Breast epithelium (tissue), 4 donors: ENCODE measurements at regions of chr11 and their contacts with region 1.

Region 1: GRCh38 chr11:777288-778255 is at the start of gene GATD1:
- DNase-seq: peak; percentile 87 to 94
- H3K4me3 ChIP-seq: peak within 1 kb of the TSS; percentile 89 to 99 (median 96)
- H3K27ac ChIP-seq: peak within 1 kb of the TSS; percentile 81 to 89
- H3K4me1 ChIP-seq: peaks cover 7 to 12% of the 10 kb centered on the region in 2 donors
- H3K27me3 ChIP-seq: no peaks in the 10 kb centered on the region
- CTCF ChIP-seq: no peak
- POLR2A ChIP-seq: no peak
- total RNA-seq, gene GATD1: 9.9 to 17.4 (median 16.4) TPM

Region 2: GRCh38 chr11:568306-569157 is 209.0 kb before region 1 on chr11:
- intact Hi-C with region 1: loop called (anchors 10 kb)
- DNase-seq: peak; percentile 92 to 93
- H3K4me3 ChIP-seq: peak overlapping the region; percentile 53 to 79 (median 65)
- H3K27ac ChIP-seq: peak overlapping the region; percentile 78 to 82
- H3K4me1 ChIP-seq: peaks cover 0 to 7% of the 10 kb centered on the region in 2 donors
- H3K27me3 ChIP-seq: no peaks in the 10 kb centered on the region
- CTCF ChIP-seq: no peak
- POLR2A ChIP-seq: no peak

Region 3: DNA sequence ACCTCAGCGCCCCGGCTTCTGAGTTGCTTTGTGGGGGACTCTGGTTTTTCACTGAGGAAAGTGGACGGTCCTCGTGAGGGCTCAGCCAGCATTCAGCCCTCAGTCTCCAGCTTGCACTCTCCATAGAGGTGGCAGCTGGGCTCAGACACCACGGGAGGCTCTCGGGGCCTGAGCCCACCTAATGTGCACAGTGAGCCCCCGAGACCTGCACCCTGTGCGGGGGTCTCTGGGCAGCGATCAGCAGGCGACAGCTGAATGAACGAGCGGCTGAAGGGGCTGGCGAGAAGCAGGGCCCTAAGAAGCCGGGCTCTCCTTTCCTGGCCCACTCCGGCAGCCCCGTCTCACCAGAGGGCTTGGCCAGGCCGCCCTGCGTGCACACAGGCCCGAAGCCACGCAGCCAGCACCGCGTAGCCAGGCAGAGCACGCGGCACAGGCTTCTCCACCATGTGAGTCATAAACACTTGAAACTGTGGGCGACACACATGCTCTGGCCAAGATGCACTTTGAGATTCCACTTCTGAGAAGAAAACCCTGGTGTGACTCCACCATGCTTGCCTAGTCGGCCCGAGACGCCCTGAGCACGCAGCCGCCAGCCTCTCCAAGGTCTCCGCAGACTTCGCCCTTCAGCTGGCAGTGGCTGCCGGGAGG is 503.9 kb after region 1 on chr11:
- intact Hi-C with region 1: no loop called
- DNase-seq: no peak
- H3K4me3 ChIP-seq: no peak overlapping the region
- H3K27ac ChIP-seq: peak overlapping the region in 1 of 2 donors; percentile 68
- H3K4me1 ChIP-seq: no peaks in the 10 kb centered on the region
- H3K27me3 ChIP-seq: no peaks in the 10 kb centered on the region
- CTCF ChIP-seq: no peak
- POLR2A ChIP-seq: no peak